Colonic mucosa (tissue), 4 donors: ENCODE measurements at regions of chr12 and their contacts with region 1.

Region 1: DNA sequence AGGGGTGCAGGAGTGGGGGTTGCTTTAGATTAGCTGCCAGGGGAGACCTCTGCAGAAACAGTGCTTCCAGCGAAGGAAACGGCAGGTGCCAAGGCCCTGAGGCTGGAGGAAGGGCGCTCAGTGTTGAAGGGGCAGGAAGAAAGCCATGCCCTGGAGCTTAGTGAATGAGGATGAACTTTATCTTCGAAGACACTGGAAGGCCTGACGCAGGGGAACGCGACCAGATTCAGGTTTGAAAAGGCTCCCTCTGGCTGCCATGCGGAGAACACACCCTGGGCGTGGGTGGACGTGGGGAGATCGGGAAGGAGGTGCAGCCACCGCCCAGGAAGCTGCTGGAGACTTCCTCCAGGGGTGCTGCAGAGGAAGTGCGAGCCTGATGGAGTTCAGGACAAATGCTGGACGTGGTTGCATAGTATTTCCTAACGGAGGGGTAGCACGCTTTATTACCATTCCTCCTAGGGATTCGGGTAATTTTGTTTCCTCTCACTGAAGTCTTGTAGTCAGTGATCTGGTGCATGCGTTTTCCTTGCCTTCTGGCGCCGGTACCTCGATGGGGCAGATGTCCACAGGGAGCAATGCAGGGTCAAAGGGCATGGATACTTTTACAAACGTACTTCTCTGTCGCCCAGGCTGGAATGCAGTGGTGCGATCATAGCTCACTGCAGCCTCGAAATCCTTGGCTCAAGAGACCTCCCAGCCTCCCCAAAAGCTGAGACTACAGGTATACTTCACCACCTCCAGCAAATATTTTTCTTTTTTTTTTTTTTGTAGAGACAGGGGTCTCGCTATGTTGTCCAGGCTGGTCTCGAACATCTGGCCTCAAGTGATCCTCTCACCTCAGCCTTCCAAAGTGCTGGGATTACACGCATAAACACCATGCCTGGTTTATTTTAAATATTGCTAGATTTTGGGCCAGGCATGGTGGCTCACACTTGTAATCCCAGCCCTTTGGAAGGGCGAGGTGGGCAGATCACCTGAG is 26.4 kb upstream of the UBC start:
- DNase-seq: peak; percentile 98
- H3K4me3 ChIP-seq: peak overlapping the region; percentile 34
- H3K27ac ChIP-seq: peak overlapping the region; percentile 90
- H3K4me1 ChIP-seq: peaks cover 3% of the 10 kb centered on the region
- H3K27me3 ChIP-seq: no peaks in the 10 kb centered on the region
- CTCF ChIP-seq: peak; percentile 93

Region 2: DNA sequence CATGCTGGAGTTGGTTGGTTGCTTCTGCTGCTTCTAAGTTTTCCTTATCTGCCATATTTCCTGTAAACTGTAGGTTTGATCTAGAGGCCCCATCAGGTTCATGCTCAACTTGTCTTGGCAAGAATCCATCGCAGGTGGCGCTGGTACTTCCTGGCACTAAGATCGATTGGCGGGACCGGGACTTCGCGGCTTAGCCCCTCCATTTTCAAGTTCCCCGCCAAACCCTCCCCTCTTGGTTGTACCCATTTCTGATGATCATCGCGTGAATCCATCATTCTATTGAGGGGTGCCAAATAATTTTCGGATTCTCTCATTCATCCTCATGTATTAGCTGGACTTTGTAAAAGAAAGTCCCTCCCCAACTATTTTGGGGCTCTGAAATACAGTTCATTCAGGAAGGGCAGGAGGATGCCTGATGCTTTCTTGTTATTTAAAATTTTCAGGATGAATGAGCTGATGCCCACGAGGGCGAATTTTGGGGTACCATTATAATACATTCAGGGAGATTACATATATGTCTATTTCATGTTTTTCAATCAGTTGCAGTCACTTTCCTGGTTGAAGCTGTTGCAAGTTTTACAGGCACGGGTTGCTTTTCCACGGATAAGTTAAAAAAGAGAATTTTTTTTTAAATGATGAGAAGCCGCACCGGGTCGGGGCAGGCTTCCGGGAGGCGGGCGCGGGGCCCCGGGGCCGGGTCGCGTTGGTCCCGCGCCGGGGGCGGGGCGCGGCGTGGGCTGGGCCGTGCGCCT is 52.2 kb after region 1 on chr12:
- intact Hi-C with region 1: loop called (anchors 5 kb)
- DNase-seq: peak; percentile 89
- H3K4me3 ChIP-seq: peak overlapping the region; percentile 25
- H3K27ac ChIP-seq: peak overlapping the region; percentile 71
- H3K4me1 ChIP-seq: peaks cover 3% of the 10 kb centered on the region
- H3K27me3 ChIP-seq: no peaks in the 10 kb centered on the region
- CTCF ChIP-seq: peak; percentile 44